Activated B cell treated with CpG ODN at 0.5 μM for 24 hours (primary cell): ENCODE measurements at regions of chr2 and their contacts with region 1.

Region 1: GRCh38 chr2:86440631-86441391 is at the start of gene KDM3A:
- DNase-seq: peak; percentile 97
- ATAC-seq: peak; percentile 81
- H3K4me3 Mint-ChIP-seq: peak within 1 kb of the TSS; percentile 96
- H3K27ac Mint-ChIP-seq: peak within 1 kb of the TSS; percentile 100
- H3K4me1 Mint-ChIP-seq: peaks cover 45% of the 10 kb centered on the region
- H3K27me3 Mint-ChIP-seq: no peaks in the 10 kb centered on the region
- CTCF ChIP-seq: no peak
- total RNA-seq, gene KDM3A: 46.0 and 47.6 TPM in 2 replicates

Region 2: GRCh38 chr2:84888401-84889276 is 1552.2 kb before region 1 on chr2:
- CTCF ChIA-PET with region 1: no interaction called
- POLR2A ChIA-PET with region 1: no interaction called
- intact Hi-C with region 1: loop called (anchors 5 kb)
- DNase-seq: peak; percentile 35
- ATAC-seq: peak; percentile 100
- H3K4me3 Mint-ChIP-seq: peak overlapping the region; percentile 77
- H3K27ac Mint-ChIP-seq: peak overlapping the region; percentile 96
- H3K4me1 Mint-ChIP-seq: peaks cover 29% of the 10 kb centered on the region
- H3K27me3 Mint-ChIP-seq: no peaks in the 10 kb centered on the region
- CTCF ChIP-seq: no peak

Region 3: DNA sequence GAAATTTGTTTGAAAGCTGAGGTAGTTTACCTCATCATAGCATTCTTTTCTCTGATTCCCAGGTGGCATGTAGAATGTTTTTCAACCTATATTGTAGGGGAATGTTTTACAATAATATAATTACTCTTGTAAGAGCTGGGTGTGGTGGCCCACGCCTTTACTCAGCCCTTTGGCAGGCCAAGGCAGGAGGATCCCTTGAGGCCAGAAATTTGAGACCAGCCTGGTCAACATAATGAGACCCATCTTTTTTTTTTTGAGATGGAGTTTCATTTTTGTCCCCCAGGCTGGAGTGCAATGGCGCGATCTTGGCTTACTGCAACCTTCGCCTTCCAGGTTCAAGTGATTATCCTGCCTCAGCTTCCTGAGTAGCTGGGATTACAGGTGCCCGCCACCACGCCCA is 821.2 kb before region 1 on chr2:
- CTCF ChIA-PET with region 1: no interaction called
- POLR2A ChIA-PET with region 1: no interaction called
- intact Hi-C with region 1: loop called (anchors 5 kb)
- DNase-seq: no peak
- ATAC-seq: no peak
- H3K4me3 Mint-ChIP-seq: no peak overlapping the region
- H3K27ac Mint-ChIP-seq: no peak overlapping the region
- H3K4me1 Mint-ChIP-seq: peaks cover 29% of the 10 kb centered on the region
- H3K27me3 Mint-ChIP-seq: no peaks in the 10 kb centered on the region
- CTCF ChIP-seq: no peak

Region 4: DNA sequence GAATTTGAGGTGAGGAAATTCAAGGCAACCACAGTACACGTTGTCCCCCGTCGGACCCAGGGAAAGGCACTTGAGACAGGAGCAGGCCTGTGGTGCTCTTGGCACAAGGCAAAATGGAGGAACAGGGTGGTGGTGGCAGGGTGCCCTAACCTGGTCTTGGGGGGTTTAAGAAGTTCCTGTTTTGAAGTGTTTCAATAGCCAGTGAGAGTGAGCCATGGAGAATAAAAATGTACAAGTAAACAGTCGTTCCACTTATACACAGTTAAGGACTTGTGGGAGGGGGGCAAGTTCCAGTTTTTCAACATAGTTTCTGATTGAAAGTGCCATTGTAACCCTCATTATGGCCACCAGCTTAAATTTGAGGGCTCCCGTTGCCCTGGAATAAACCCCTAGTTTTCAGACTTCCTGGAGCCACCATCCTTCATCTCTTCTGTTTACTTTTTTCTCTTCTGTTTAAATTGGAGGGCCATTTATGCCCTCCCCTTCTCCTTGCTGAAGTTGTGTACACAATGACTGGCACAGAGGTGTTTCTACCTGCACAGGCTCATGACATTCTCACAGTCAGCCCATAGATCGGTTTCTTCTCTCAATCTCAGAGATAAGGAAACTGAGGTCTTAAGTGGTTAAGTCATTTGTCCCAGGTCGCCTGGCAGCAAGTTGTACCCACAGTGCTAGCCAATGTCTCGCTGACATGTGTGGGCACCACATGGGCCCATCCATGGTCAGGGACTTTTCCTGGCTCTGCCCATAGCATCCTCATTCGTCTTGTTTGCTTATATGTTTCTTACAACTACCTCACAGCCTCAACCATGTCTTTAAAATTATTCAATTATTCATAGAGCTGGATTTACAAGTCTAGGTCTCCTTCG is 486.0 kb before region 1 on chr2:
- CTCF ChIA-PET with region 1: no interaction called
- POLR2A ChIA-PET with region 1: no interaction called
- intact Hi-C with region 1: no loop called
- DNase-seq: no peak
- ATAC-seq: no peak
- H3K4me3 Mint-ChIP-seq: no peak overlapping the region
- H3K27ac Mint-ChIP-seq: no peak overlapping the region
- H3K4me1 Mint-ChIP-seq: no peaks in the 10 kb centered on the region
- H3K27me3 Mint-ChIP-seq: no peaks in the 10 kb centered on the region
- CTCF ChIP-seq: no peak

Region 5: GRCh38 chr2:86185517-86186212 is 255.1 kb before region 1 on chr2:
- CTCF ChIA-PET with region 1: no interaction called
- POLR2A ChIA-PET with region 1: interaction called, 11 read pairs
- intact Hi-C with region 1: no loop called
- DNase-seq: no peak
- ATAC-seq: peak; percentile 52
- H3K4me3 Mint-ChIP-seq: peak overlapping the region; percentile 32
- H3K27ac Mint-ChIP-seq: peak overlapping the region; percentile 81
- H3K4me1 Mint-ChIP-seq: peaks cover 61% of the 10 kb centered on the region
- H3K27me3 Mint-ChIP-seq: no peaks in the 10 kb centered on the region
- CTCF ChIP-seq: no peak

Region 6: DNA sequence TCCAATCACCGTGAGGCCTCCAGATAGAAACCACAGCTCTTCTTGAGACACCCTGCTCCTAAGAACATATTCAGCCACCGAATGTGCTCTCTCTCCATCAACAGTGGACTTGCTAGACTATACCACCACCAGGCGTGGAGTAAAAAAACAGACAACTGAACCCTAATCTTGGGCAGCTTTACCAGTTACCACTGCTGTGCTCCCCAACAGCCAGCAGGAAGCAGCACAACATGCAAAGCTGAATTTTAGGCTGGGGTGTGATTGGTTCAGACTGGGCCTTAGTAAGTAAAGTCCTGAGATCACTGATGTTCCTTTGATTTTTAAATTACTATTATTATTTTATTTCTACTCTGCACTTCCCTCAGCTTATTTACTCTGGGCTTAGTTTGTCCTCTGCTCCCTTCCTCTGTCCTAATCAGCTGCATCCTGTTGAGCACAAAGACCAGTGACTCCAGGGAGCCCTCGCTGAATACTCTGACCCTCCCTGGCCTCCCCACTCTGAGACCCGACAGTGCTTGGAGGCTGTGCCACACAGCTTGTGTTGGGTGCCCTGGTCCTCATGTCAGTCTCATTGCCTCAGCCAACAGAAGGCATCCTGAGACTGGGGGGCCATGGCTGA is 219.6 kb before region 1 on chr2:
- CTCF ChIA-PET with region 1: interaction called, 20 read pairs
- POLR2A ChIA-PET with region 1: interaction called, 12 read pairs
- intact Hi-C with region 1: loop called (anchors 1 kb)
- DNase-seq: peak; percentile 50
- ATAC-seq: peak; percentile 77
- H3K4me3 Mint-ChIP-seq: no peak overlapping the region
- H3K27ac Mint-ChIP-seq: no peak overlapping the region
- H3K4me1 Mint-ChIP-seq: peaks cover 21% of the 10 kb centered on the region
- H3K27me3 Mint-ChIP-seq: no peaks in the 10 kb centered on the region
- CTCF ChIP-seq: peak; percentile 57

Region 7: GRCh38 chr2:86453836-86454235 is 13.0 kb after region 1 on chr2:
- CTCF ChIA-PET with region 1: no interaction called
- POLR2A ChIA-PET with region 1: interaction called, 11 read pairs
- intact Hi-C with region 1: no loop called
- DNase-seq: no peak
- ATAC-seq: no peak
- H3K4me3 Mint-ChIP-seq: no peak overlapping the region
- H3K27ac Mint-ChIP-seq: no peak overlapping the region
- H3K4me1 Mint-ChIP-seq: no peaks in the 10 kb centered on the region
- H3K27me3 Mint-ChIP-seq: no peaks in the 10 kb centered on the region
- CTCF ChIP-seq: no peak

Region 8: DNA sequence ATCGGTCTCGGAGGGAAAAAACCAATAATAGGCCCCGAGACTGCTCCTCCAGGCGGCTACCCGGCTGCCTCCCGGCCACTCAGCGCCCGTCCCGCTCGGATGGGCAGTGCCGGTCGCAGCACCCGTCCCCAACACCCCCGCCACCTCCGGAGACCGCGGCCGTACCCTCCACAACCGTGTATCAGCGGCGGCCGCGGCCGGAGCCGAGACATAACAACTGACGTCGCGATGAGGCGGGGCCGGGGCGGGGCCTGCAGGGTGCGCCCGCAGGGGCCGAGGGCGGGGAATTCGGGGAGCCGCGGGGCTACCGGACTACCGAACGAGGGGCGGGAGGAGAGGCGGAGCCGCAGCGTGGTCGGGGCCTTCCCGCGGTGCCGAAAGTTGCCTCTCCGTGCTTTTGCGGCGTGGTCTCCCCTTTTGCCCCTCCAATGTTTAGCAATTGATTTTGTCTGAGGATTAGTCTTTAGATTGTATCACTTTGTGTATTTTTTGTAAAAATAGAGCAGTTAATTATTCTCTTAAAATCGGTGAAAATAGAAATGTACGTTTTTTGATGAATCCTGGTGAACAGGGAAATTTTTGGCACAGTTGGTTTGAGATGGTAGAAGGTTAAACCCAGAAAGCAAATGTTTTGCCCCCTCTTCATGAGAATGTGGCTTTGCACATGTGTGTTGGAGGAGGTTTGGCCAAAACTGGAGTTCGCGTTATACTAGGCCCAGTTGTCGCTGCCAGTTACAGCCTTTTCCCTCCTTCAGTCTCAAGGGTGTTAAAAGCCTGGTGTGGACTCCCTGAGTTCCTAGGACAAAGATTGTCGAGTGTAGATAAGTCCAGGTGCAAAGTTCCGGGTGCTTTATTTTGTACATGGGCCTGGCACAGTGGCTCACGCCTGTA is 183.1 kb after region 1 on chr2 and contains the start of gene RNF103:
- CTCF ChIA-PET with region 1: no interaction called
- POLR2A ChIA-PET with region 1: interaction called, 35 read pairs
- intact Hi-C with region 1: loop called (anchors 1 kb)
- DNase-seq: peak; percentile 98
- ATAC-seq: peak; percentile 86
- H3K4me3 Mint-ChIP-seq: peak within 1 kb of the TSS; percentile 94
- H3K27ac Mint-ChIP-seq: peak within 1 kb of the TSS; percentile 96
- H3K4me1 Mint-ChIP-seq: peaks cover 35% of the 10 kb centered on the region
- H3K27me3 Mint-ChIP-seq: no peaks in the 10 kb centered on the region
- CTCF ChIP-seq: no peak
- total RNA-seq, gene RNF103: 18.6 and 22.2 TPM in 2 replicates